Heart right ventricle (tissue), 16 donors: ENCODE measurements at regions of chr5 and their contacts with region 1.

Region 1: GRCh38 chr5:15821506-15821905 is 321.5 kb downstream of the FBXL7 start:
- DNase-seq: no peak
- ATAC-seq: no peak
- H3K4me3 ChIP-seq: no peak overlapping the region
- H3K27ac ChIP-seq: no peak overlapping the region
- H3K4me1 ChIP-seq: peaks cover 0 to 16% (median 6%) of the 10 kb centered on the region in 9 donors
- H3K27me3 ChIP-seq: no peaks in the 10 kb centered on the region
- CTCF ChIP-seq: no peak

Region 2: GRCh38 chr5:15285901-15286583 is 535.5 kb before region 1 on chr5:
- intact Hi-C with region 1: loop called in 1 of 10 experiments (anchors 10 kb)
- DNase-seq: peak in 1 of 2 donors; percentile 32
- ATAC-seq: peak; percentile 38 to 85 (median 82)
- H3K4me3 ChIP-seq: no peak overlapping the region
- H3K27ac ChIP-seq: no peak overlapping the region
- H3K4me1 ChIP-seq: peaks cover 0 to 9% (median 0%) of the 10 kb centered on the region in 9 donors
- H3K27me3 ChIP-seq: no peaks in the 10 kb centered on the region
- CTCF ChIP-seq: no peak

Region 3: DNA sequence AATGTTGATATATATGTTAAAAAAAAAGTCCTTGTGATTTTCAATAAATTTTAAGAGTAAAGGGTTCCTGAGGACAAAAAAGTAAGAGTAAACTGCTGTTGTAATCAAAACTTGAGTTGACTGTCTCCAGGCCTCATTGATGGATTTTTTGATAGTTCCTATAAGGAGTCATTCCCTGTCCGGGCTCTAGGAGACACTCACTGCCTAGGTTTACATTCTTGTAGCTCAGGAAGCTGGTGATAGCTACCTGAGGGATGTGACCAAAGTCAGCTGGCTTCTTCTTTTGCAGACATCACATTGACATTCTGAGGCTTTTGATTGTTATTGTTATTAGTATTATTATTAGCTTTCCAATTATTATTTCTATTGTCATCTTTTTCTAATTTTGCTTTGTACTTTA is 438.0 kb before region 1 on chr5:
- intact Hi-C with region 1: loop called in 2 of 10 experiments (anchors 10 kb)
- DNase-seq: no peak
- ATAC-seq: peak in 1 of 8 donors; percentile 52
- H3K4me3 ChIP-seq: no peak overlapping the region
- H3K27ac ChIP-seq: no peak overlapping the region
- H3K4me1 ChIP-seq: no peaks in the 10 kb centered on the region
- H3K27me3 ChIP-seq: no peaks in the 10 kb centered on the region
- CTCF ChIP-seq: peak in 8 of 9 donors; percentile 14 to 57 (median 41)

Region 4: DNA sequence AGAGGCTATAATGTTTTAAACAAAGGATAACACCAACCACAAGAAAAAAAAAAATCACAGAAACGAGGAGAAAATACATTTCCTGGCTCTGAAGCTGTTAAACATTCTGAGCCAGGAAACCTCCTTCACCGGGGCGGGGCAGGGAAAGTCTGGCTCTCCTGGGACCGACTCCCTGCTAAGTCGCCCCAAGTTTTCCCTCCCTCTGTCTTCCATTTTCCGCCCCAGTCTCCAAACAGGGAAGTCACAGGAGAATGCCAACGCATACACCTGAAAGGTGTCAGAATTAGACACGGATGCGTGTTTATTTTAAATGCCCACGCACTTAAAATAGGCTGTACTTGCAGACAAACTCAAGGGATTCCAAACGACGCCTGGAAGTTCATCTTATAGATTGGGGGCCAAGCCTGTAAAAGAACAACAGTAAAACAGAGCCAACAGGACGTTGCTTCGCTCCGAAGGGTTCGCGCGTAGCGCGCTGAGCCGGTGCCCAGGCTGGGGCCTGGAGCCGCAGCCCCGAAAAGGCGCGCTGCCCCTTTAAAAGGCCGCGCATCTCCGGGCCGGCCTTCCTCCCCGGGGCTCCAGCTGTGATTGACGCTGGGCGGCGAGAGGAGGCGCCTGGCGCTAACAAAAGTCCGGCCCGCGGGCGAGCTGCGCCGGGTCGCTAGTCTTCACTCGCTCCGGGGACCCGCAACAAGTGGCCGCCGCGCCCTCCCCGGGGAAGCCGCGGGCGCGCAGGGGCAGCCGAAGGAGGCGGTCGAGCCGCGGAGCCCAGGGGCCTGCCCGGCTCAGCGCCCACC is 321.8 kb before region 1 on chr5 and contains the start of gene FBXL7:
- intact Hi-C with region 1: loop called in 3 of 10 experiments (anchors 2 to 10 kb)
- DNase-seq: peak; percentile 86 to 87
- ATAC-seq: peak; percentile 88 to 94 (median 92)
- H3K4me3 ChIP-seq: peak within 1 kb of the TSS; percentile 71 to 96 (median 82)
- H3K27ac ChIP-seq: peak within 1 kb of the TSS; percentile 83 to 97 (median 90)
- H3K4me1 ChIP-seq: peaks cover 3 to 35% (median 26%) of the 10 kb centered on the region in 9 donors
- H3K27me3 ChIP-seq: peaks cover 0 to 26% (median 0%) of the 10 kb centered on the region in 7 donors
- CTCF ChIP-seq: peak in 7 of 9 donors; percentile 6 to 62 (median 39)
- total RNA-seq, gene FBXL7: 10.5 to 33.4 (median 23.6) TPM

Region 5: DNA sequence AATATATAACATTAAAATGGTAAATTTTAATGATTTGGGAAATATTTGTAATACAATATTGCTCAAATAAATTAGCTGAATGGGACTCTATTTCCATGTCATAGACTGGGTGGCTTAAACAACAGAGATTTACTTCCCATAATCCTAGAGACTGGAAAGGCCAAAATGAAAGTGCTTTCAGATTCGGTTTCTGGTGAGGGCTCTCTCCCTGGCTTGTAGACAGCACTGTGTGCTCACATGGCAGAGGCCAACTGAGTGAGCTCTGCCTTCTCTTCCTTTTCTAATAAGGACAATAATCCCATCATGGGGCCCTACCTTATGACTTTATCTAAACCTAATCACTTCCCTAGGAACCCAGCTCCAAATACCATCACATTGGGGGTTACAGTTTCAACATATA is 161.9 kb after region 1 on chr5:
- intact Hi-C with region 1: loop called in 1 of 10 experiments (anchors 10 kb)
- DNase-seq: no peak
- ATAC-seq: peak in 2 of 8 donors; percentile 28 to 35
- H3K4me3 ChIP-seq: no peak overlapping the region
- H3K27ac ChIP-seq: no peak overlapping the region
- H3K4me1 ChIP-seq: peaks cover 0 to 19% (median 0%) of the 10 kb centered on the region in 9 donors
- H3K27me3 ChIP-seq: no peaks in the 10 kb centered on the region
- CTCF ChIP-seq: no peak